Posterior vena cava (tissue), 2 donors: ENCODE measurements at regions of chr22 and their contacts with region 1.

Region 1: GRCh38 chr22:45553351-45554039 is 50.8 kb downstream of the FBLN1 start:
- DNase-seq: peak; percentile 91

Region 2: DNA sequence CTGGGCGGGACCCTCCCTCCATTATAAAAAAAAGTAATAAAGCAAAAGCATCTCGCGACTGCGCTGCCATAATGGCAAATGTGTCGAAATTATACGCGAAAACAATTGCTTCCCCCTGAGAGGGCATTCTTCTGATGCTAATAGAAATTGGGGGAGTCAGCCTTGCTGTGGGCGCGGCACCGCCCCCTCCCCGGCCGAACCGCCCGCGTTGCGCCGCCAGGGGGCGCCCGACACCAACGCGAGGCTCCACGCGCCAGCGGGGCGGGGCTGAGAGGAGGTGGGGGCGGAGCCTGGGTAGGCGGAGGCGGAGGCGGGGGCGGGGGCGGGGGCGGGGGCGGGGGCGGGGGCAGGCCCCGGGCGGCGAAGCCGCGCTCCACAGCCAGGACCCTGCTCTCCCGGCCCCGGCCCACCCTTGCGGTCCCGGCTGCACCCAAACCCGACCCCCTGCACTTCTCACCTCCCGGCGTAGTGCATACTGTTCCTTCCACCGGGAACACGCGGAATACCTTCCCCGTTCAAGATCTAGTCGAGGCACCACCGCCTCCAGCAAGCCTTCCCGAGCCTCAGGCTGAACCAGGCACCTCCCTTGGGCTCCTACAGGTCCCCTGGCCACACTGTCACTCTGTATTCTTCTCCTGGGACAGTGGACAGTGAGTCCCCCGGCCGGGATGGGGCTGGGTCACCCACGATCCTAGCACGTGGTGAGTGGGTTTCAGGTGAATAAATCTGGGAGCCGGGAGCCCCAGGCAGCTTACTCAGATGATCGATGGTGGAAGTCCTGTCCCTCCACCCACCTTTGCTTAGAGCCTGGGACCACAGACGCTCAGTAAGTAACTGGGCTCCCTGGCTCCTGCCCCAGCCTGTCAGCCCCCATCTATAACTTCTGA is 284.3 kb before region 1 on chr22:
- intact Hi-C with region 1: loop called (anchors 5 kb)
- DNase-seq: peak; percentile 96

Region 3: DNA sequence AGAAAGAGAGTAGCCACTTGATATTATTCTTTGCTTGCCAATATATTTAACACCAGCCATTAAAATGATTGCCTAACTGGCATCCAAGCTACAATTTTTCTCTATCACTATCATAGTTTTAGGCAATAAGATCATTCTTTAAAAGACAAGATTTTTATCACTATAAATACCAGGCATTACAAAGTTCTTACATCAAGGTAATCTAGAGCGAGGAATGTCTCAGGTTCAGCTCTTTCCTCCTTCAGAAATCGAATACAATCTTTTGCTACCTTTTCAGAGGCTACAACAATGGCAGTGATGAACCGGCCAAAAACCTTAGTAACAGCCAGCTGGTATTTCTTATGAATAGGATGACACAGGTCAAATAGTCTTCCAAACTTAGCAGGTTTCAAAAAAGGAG is 164.0 kb before region 1 on chr22:
- intact Hi-C with region 1: no loop called
- DNase-seq: no peak

Region 4: DNA sequence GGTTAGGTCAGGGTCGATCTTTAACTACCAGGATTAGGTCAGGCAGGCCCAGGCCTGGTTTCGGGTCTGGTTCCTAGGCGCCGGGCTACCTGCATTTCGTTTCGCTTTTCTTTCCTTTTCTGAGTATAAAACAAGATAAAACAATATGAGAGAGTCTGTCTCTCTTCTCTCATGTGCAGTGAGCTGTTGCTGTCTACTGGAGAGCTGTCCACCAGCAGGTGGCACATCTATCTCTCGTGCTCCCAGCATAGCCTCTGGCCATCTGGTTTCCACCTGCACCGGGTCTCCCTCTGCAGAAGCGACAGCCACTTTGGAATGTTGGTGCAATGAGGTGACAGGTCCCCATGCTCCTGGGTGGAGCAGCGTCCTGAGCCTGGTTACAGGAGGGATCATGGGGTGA is 112.4 kb before region 1 on chr22:
- intact Hi-C with region 1: loop called (anchors 2 to 5 kb)
- DNase-seq: no peak

Region 5: GRCh38 chr22:45448431-45448830 is 105.1 kb before region 1 on chr22:
- intact Hi-C with region 1: loop called in 1 of 2 experiments (anchors 5 kb)
- DNase-seq: peak; percentile 93

Region 6: DNA sequence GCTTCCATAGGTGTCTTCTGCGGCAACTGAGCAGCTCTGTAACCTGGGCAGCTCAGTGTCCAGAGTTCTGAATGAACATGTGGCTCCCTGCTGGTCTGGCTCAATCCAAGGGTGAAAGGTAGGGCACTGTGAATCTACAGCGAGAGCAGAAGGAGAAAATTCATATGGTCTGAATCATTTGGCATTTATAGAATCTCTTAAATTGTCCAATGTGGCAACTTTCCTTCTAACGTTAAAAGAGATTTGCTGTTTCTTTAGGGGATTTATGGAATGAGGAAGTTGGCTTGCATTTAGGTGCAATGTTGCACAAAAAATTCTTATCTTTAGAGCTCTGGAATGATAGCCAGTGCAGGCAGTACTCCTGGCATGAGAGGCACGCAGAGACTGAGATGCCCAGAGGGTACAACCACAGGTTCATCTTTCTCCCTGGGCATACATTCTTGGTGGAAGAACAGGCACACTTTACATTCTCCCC is 135.1 kb after region 1 on chr22:
- intact Hi-C with region 1: no loop called
- DNase-seq: no peak